ENCODE measurements at regions of chr2 and their contacts with region 1.

Region 1: GRCh38 chr2:17753803-17754663 is at the starts of genes GEN1 and SMC6:
- DNase-seq: peak; percentile 94
- H3K4me3 Mint-ChIP-seq: peak within 1 kb of the TSS; percentile 83
- H3K27ac Mint-ChIP-seq: peak within 1 kb of the TSS; percentile 97
- H3K4me1 Mint-ChIP-seq: peaks cover 27% of the 10 kb centered on the region
- H3K27me3 Mint-ChIP-seq: no peaks in the 10 kb centered on the region
- total RNA-seq, gene GEN1: 24.0 to 30.9 TPM
- total RNA-seq, gene SMC6: 21.4 to 22.7 TPM

Region 2: GRCh38 chr2:17544256-17544655 is 209.8 kb before region 1 on chr2:
- CTCF ChIA-PET with region 1: no interaction called
- POLR2A ChIA-PET with region 1: no interaction called
- intact Hi-C with region 1: no loop called
- DNase-seq: no peak
- H3K4me3 Mint-ChIP-seq: no peak overlapping the region
- H3K27ac Mint-ChIP-seq: no peak overlapping the region
- H3K4me1 Mint-ChIP-seq: peaks cover 2% of the 10 kb centered on the region
- H3K27me3 Mint-ChIP-seq: peaks cover 37% of the 10 kb centered on the region

Region 3: DNA sequence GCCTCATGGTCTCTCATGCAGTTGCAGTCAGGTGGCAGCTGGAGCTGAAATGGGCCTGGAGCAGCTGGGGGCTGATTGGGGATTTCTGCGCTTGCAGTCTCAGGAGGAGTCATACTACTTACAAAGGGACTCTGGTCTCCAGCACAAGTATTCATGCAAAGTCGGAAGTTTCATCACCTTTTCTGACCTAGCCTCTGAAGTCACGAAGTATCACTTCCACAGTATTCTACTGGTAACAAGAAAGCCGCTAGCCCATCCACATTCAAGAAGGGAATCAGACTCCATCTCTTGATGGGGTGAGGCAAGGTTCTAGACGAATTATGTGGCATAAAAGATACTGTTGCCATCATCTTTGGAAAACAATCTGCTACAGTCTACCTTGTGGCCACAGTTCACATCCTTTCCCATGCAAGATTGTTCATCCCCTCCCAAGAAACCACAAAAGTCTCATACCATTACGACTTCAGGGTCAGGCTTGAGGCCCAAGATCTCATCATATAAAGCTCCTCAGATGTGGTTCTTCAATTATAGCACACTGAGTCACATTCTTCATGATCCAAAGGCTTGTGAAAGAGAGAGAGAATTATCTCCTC is 95.7 kb before region 1 on chr2:
- CTCF ChIA-PET with region 1: no interaction called
- POLR2A ChIA-PET with region 1: interaction called, 3 read pairs
- intact Hi-C with region 1: loop called (anchors 5 kb)
- DNase-seq: peak; percentile 42
- H3K4me3 Mint-ChIP-seq: no peak overlapping the region
- H3K27ac Mint-ChIP-seq: peak overlapping the region; percentile 40
- H3K4me1 Mint-ChIP-seq: peaks cover 13% of the 10 kb centered on the region
- H3K27me3 Mint-ChIP-seq: no peaks in the 10 kb centered on the region

Region 4: DNA sequence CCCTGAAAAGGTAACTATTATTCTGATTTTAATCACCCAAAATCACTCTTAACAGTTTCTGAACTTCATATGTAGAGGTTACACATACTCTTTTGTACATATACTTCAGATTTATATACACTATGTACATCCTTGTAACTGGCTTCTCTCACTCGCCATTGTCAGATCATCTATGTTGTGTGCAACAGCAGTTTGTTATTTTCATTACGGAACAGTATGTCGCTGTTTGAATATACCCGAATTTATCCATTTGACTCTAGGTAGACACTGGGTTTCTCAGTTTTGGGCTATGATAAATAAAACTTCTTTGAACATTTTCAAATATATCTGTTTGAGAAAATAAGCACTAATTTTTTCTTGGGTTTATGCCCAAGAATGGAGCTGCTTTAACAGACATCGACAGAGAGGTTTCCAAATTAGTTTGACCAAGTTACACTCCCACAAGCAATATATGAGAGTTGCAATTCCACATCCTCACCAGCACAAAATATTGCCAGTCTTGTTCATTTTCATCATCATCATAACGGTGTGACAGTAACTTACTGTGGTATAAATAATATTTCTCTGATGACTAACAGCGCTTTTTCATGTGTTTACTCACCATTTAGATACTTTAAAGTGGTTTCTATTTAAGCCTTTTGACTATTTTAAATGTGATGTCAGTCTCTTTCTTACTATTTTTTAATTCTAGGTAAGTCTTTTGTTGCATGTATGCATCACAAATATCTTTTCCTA is 81.3 kb before region 1 on chr2:
- CTCF ChIA-PET with region 1: interaction called, 5 read pairs
- POLR2A ChIA-PET with region 1: no interaction called
- intact Hi-C with region 1: loop called (anchors 5 kb)
- DNase-seq: no peak
- H3K4me3 Mint-ChIP-seq: no peak overlapping the region
- H3K27ac Mint-ChIP-seq: no peak overlapping the region
- H3K4me1 Mint-ChIP-seq: peaks cover 14% of the 10 kb centered on the region
- H3K27me3 Mint-ChIP-seq: no peaks in the 10 kb centered on the region

Region 5: GRCh38 chr2:17719562-17720371 is 34.3 kb before region 1 on chr2:
- CTCF ChIA-PET with region 1: interaction called, 4 read pairs
- POLR2A ChIA-PET with region 1: no interaction called
- intact Hi-C with region 1: loop called (anchors 2 kb)
- DNase-seq: no peak
- H3K4me3 Mint-ChIP-seq: no peak overlapping the region
- H3K27ac Mint-ChIP-seq: no peak overlapping the region
- H3K4me1 Mint-ChIP-seq: no peaks in the 10 kb centered on the region
- H3K27me3 Mint-ChIP-seq: no peaks in the 10 kb centered on the region

Region 6: GRCh38 chr2:18560031-18560796 is 806.2 kb after region 1 on chr2 and contains the start of gene RDH14:
- CTCF ChIA-PET with region 1: interaction called, 3 read pairs
- POLR2A ChIA-PET with region 1: no interaction called
- intact Hi-C with region 1: loop called (anchors 2 kb)
- DNase-seq: peak; percentile 94
- H3K4me3 Mint-ChIP-seq: peak within 1 kb of the TSS; percentile 90
- H3K27ac Mint-ChIP-seq: peak within 1 kb of the TSS; percentile 89
- H3K4me1 Mint-ChIP-seq: peaks cover 33% of the 10 kb centered on the region
- H3K27me3 Mint-ChIP-seq: no peaks in the 10 kb centered on the region
- total RNA-seq, gene RDH14: 14.1 to 14.4 TPM